CD4-positive, alpha-beta memory T cell (primary cell): ENCODE measurements at regions of chr18 and their contacts with region 1.

Region 1: GRCh38 chr18:58043491-58044379 is at the start of gene NEDD4L:
- DNase-seq: peak; percentile 62 to 78 (median 65)
- H3K4me3 ChIP-seq: peak within 1 kb of the TSS; percentile 52 to 54
- H3K4me3 Mint-ChIP-seq: peak within 1 kb of the TSS; percentile 89 to 96 (median 93)
- H3K27ac ChIP-seq: no peak within 1 kb of the TSS
- H3K27ac Mint-ChIP-seq: peak within 1 kb of the TSS; percentile 41 to 85 (median 82)
- H3K4me1 ChIP-seq: peaks cover 19% of the 10 kb centered on the region
- H3K4me1 Mint-ChIP-seq: peaks cover 18 to 35% (median 26%) of the 10 kb centered on the region in 4 donors
- H3K27me3 ChIP-seq: no peaks in the 10 kb centered on the region
- H3K27me3 Mint-ChIP-seq: peaks cover 9 to 16% of the 10 kb centered on the region in 2 donors
- total RNA-seq, gene NEDD4L: 2.8 to 3.5 TPM

Region 2: GRCh38 chr18:57621246-57621604 is 422.5 kb before region 1 on chr18:
- CTCF ChIA-PET with region 1: interaction called, 3 read pairs
- POLR2A ChIA-PET with region 1: no interaction called
- intact Hi-C with region 1: loop called (anchors 10 kb)
- DNase-seq: no peak
- H3K4me3 ChIP-seq: peak overlapping the region; percentile 85 to 86
- H3K4me3 Mint-ChIP-seq: peak overlapping the region; percentile 94 to 99 (median 96)
- H3K27ac ChIP-seq: peak overlapping the region; percentile 88
- H3K27ac Mint-ChIP-seq: peak overlapping the region; percentile 96 to 99 (median 98)
- H3K4me1 ChIP-seq: peaks cover 31% of the 10 kb centered on the region
- H3K4me1 Mint-ChIP-seq: peaks cover 17 to 41% (median 29%) of the 10 kb centered on the region in 4 donors
- H3K27me3 ChIP-seq: no peaks in the 10 kb centered on the region
- H3K27me3 Mint-ChIP-seq: no peaks in the 10 kb centered on the region

Region 3: DNA sequence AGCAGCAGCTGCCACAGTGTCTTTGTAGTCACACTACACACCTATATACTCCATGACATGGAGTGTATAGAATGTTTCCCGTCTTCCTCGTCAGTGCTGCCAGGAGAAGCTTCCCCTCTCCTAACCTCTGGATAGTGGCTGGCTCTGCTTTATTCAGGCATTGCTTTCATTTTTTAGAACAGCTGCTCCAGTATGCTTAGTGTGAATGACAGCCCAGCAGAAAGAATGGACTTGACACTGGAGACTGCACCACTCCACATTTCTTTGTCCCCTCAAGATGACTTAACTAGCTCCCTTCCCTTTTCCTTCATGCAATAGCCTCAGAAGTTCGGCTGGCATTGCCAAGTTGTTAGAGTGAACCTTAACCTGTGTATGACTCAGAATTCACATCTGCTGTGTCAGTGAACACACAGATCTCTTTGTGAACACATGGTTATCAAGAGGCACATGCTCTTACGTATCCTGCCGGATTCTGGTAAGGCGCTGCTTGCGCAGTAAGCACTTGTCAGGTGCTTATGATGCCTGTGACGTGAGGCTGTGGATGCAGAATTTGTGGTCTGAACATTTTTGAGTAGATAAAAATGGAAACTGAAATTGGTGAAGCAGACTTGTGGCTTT is 74.2 kb after region 1 on chr18:
- CTCF ChIA-PET with region 1: interaction called, 12 read pairs
- POLR2A ChIA-PET with region 1: no interaction called
- intact Hi-C with region 1: loop called (anchors 1 kb)
- DNase-seq: no peak
- H3K4me3 ChIP-seq: no peak overlapping the region
- H3K4me3 Mint-ChIP-seq: no peak overlapping the region
- H3K27ac ChIP-seq: no peak overlapping the region
- H3K27ac Mint-ChIP-seq: no peak overlapping the region
- H3K4me1 ChIP-seq: no peaks in the 10 kb centered on the region
- H3K4me1 Mint-ChIP-seq: peaks cover 0 to 2% (median 0%) of the 10 kb centered on the region in 4 donors
- H3K27me3 ChIP-seq: no peaks in the 10 kb centered on the region
- H3K27me3 Mint-ChIP-seq: peaks cover 5 to 12% of the 10 kb centered on the region in 2 donors

Region 4: DNA sequence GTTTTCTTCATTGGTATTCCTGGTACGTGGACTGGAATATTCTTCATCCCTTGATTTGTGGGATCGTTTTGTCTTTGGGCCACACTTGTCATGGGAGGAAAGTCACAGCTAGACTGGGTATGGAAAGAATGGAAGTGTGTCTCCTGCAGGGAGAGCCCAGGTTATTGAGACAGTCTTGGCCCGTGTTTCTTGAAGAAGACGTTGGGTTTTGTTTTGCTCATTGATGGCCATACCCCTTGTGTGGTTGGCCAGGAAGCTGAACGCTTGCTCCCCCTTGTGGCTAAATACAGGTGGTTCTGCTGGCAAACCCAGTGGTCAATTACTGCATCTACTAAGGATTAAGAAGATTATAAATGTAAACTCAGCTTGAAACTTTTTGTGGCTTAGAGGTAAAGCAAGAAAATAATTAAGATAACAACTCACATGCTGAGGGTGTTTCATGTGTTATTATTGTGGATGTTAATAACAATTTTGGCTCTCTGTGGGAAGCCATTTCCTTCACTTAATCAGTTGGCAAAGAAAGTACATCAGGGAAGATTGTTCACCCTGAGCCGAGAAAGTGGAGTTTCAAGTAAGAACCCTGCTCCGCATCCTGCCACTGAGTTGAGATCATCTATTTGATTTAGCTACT is 92.1 kb after region 1 on chr18:
- CTCF ChIA-PET with region 1: interaction called, 5 read pairs
- POLR2A ChIA-PET with region 1: no interaction called
- intact Hi-C with region 1: loop called (anchors 5 kb)
- DNase-seq: peak in 4 of 5 donors; percentile 24 to 33 (median 31)
- H3K4me3 ChIP-seq: no peak overlapping the region
- H3K4me3 Mint-ChIP-seq: peak overlapping the region in 3 of 8 donors; percentile 22 to 69 (median 38)
- H3K27ac ChIP-seq: no peak overlapping the region
- H3K27ac Mint-ChIP-seq: no peak overlapping the region
- H3K4me1 ChIP-seq: peaks cover 7% of the 10 kb centered on the region
- H3K4me1 Mint-ChIP-seq: peaks cover 5 to 17% (median 12%) of the 10 kb centered on the region in 4 donors
- H3K27me3 ChIP-seq: no peaks in the 10 kb centered on the region
- H3K27me3 Mint-ChIP-seq: peaks cover 10 to 14% of the 10 kb centered on the region in 2 donors

Region 5: GRCh38 chr18:58180738-58181353 is 137.1 kb after region 1 on chr18:
- CTCF ChIA-PET with region 1: interaction called, 10 read pairs
- POLR2A ChIA-PET with region 1: no interaction called
- intact Hi-C with region 1: loop called (anchors 1 kb)
- DNase-seq: peak; percentile 36 to 55 (median 46)
- H3K4me3 ChIP-seq: no peak overlapping the region
- H3K4me3 Mint-ChIP-seq: no peak overlapping the region
- H3K27ac ChIP-seq: no peak overlapping the region
- H3K27ac Mint-ChIP-seq: no peak overlapping the region
- H3K4me1 ChIP-seq: no peaks in the 10 kb centered on the region
- H3K4me1 Mint-ChIP-seq: peaks cover 0 to 4% (median 2%) of the 10 kb centered on the region in 4 donors
- H3K27me3 ChIP-seq: no peaks in the 10 kb centered on the region
- H3K27me3 Mint-ChIP-seq: peaks cover 3 to 5% of the 10 kb centered on the region in 2 donors

Region 6: GRCh38 chr18:58190842-58191530 is 147.3 kb after region 1 on chr18:
- CTCF ChIA-PET with region 1: no interaction called
- POLR2A ChIA-PET with region 1: no interaction called
- intact Hi-C with region 1: no loop called
- DNase-seq: no peak
- H3K4me3 ChIP-seq: no peak overlapping the region
- H3K4me3 Mint-ChIP-seq: no peak overlapping the region
- H3K27ac ChIP-seq: no peak overlapping the region
- H3K27ac Mint-ChIP-seq: no peak overlapping the region
- H3K4me1 ChIP-seq: no peaks in the 10 kb centered on the region
- H3K4me1 Mint-ChIP-seq: peaks cover 6 to 16% (median 12%) of the 10 kb centered on the region in 4 donors
- H3K27me3 ChIP-seq: no peaks in the 10 kb centered on the region
- H3K27me3 Mint-ChIP-seq: peaks cover 3 to 7% of the 10 kb centered on the region in 2 donors

Region 7: GRCh38 chr18:58493516-58494253 is 449.9 kb after region 1 on chr18:
- CTCF ChIA-PET with region 1: no interaction called
- POLR2A ChIA-PET with region 1: no interaction called
- intact Hi-C with region 1: loop called (anchors 5 kb)
- DNase-seq: peak; percentile 60 to 73 (median 62)
- H3K4me3 ChIP-seq: no peak overlapping the region
- H3K4me3 Mint-ChIP-seq: peak overlapping the region in 3 of 8 donors; percentile 8 to 23 (median 21)
- H3K27ac ChIP-seq: no peak overlapping the region
- H3K27ac Mint-ChIP-seq: peak overlapping the region in 2 of 7 donors; percentile 23 to 32
- H3K4me1 ChIP-seq: peaks cover 7% of the 10 kb centered on the region
- H3K4me1 Mint-ChIP-seq: peaks cover 4 to 15% (median 5%) of the 10 kb centered on the region in 4 donors
- H3K27me3 ChIP-seq: no peaks in the 10 kb centered on the region
- H3K27me3 Mint-ChIP-seq: peaks cover 22% of the 10 kb centered on the region in 2 donors